ENCODE measurements at regions of chr9 and their contacts with region 1.

Region 1: GRCh38 chr9:70455993-70456704 is 41.7 kb upstream of the KLF9 start:
- DNase-seq: no peak
- H3K4me3 Mint-ChIP-seq: no peak overlapping the region
- H3K27ac Mint-ChIP-seq: no peak overlapping the region
- H3K4me1 Mint-ChIP-seq: no peaks in the 10 kb centered on the region
- H3K27me3 Mint-ChIP-seq: no peaks in the 10 kb centered on the region

Region 2: DNA sequence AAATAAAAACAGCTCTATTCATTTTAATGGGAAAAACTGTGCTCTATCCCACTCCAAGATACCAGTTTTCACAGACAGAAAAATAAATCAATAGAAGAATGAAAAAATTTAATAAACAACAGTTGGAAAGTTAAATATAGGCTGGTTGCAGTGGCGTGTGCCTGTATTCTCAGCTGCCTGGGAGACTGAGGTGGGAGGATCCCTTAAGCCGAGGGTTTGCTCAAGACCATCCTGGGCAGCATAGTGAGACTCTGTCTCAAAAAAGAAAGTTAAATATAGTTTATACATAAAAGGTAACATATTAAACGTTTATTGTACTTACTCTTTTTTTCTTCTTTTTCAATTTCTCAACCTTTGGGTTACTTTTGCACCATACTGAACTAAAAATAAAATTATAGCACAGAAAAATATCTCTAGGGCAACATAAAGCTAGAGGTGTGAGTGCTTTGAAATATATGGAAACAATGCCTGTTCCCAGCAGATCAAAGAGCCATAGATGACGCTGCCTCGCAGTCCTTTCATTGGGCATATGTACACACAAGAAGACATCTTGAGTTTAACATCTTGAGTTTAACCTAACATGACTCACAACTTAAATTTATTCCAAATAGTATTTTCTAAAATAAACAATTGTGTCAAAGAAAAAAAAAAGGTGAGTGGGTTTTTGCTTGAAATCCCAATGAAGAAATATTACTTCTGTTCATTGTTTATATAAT is 16.0 kb before region 1 on chr9:
- intact Hi-C with region 1: loop called (anchors 2 kb)
- DNase-seq: no peak
- H3K4me3 Mint-ChIP-seq: no peak overlapping the region
- H3K27ac Mint-ChIP-seq: no peak overlapping the region
- H3K4me1 Mint-ChIP-seq: peaks cover 14% of the 10 kb centered on the region
- H3K27me3 Mint-ChIP-seq: no peaks in the 10 kb centered on the region